ENCODE measurements at regions of chr15 and their contacts with region 1.

Region 1: DNA sequence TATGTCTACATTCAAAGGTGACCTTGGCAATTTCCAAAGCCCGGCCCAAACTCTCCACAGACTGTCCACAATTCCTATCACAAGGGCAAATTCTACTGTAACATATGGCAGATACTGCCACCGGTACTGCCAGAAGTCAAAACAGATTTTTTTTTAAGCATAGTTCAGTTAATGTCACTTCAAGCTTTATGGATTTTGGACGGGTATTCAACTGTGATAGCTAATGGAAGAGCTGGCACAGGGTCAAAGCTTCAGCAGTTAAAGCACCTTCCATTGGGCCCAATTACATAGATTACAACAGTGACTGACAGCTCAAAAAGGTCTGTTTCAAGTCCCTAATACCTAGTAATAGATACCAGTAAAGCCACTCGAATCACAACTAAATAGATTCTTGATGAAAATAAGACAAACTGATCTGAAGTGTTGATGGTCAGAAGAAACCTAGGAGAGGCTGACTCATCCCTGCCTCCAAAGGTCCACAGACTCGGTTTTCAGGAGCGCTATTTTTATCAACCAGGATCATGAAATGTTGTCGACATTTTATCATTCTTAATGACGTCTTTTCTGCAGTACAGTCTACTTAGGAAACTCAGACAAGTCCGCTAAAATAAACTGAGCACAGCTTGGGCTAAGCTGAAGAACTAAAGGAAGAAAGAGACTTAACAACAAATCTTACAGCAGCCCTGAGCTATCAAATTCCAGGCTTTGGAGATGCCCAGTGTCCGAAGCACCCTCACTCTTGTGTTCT is 38.7 kb downstream of the ANXA2 start:
- DNase-seq: peak; percentile 41 to 48
- H3K4me3 ChIP-seq: no peak overlapping the region
- H3K27ac ChIP-seq: peak overlapping the region; percentile 56 to 87 (median 70)
- H3K4me1 ChIP-seq: peaks cover 32 to 60% (median 47%) of the 10 kb centered on the region in 4 donors
- H3K27me3 ChIP-seq: no peaks in the 10 kb centered on the region
- CTCF ChIP-seq: no peak
- EP300 ChIP-seq: no peak
- POLR2A ChIP-seq: no peak

Region 2: GRCh38 chr15:60448668-60449360 is 89.7 kb after region 1 on chr15:
- intact Hi-C with region 1: loop called (anchors 5 kb)
- DNase-seq: no peak
- H3K4me3 ChIP-seq: no peak overlapping the region
- H3K27ac ChIP-seq: no peak overlapping the region
- H3K4me1 ChIP-seq: peaks cover 0 to 12% (median 0%) of the 10 kb centered on the region in 4 donors
- H3K27me3 ChIP-seq: no peaks in the 10 kb centered on the region
- CTCF ChIP-seq: no peak
- EP300 ChIP-seq: no peak
- POLR2A ChIP-seq: no peak

Region 3: DNA sequence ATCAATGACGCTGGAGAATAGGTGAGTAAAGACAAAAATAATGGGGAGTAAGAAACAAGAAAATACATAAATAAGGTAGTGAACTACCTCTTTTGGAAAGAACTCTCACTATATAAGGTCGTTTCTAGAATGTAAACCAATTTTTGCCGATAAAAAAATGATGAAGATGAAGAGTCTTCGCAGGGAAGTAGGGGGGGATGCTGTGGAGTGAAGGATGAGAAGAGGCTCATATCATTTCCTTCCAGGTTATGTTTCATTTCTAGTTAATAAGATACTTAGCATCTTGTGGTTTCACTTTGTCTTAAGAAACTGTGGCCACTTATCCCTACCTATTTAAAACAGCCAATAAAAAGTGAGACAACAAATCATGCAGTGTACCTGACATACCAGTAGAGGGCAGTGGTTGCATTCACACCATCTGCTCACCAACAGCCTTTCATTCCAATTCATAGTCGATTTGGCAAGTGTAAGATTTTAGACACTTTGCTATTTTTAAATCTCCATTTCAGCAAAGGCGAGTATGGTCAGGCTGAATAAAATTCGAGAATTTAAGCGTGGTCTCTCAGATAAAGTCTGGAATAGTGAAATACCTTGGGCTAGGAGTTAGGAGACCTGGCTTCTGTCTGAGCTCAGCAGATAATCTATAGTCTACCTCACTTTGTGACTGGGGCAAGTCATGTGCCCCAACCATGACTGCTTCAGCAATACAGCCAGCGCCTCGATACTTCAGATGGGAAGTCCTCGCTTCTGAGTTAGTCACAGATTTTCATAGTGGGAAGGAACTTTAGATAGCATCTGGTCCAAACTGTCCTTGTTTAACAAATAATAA is 148.7 kb after region 1 on chr15:
- intact Hi-C with region 1: no loop called
- DNase-seq: peak; percentile 38 to 87
- H3K4me3 ChIP-seq: no peak overlapping the region
- H3K27ac ChIP-seq: peak overlapping the region in 1 of 5 donors; percentile 2
- H3K4me1 ChIP-seq: peaks cover 4 to 17% (median 7%) of the 10 kb centered on the region in 4 donors
- H3K27me3 ChIP-seq: no peaks in the 10 kb centered on the region
- CTCF ChIP-seq: peak in 5 of 7 experiments; percentile 72 to 95 (median 90)
- EP300 ChIP-seq: no peak
- POLR2A ChIP-seq: no peak

Measured in stomach (tissue), 19 donors.